ENCODE measurements at regions of chr3 and their contacts with region 1.

Region 1: DNA sequence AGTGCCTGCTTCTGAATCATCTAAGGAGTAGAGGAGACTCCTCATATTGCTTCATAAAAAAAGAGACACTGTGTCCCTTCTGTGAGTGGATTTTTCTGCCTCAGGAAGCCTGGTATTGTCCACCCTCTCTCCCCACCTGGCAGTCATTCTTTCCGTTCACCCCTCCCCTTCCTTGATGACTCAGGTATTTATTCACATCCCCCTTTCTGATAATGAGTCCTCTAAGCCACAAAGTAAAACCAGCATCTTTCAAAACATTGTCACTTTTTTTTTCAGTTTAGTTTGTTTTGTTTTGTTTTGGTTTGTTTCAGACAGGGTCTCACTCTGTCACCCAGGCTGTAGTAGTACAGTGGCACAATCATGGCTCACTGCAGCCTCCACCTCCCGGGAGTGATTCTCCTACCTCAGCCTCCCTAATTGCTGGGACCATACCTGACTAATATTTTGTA is 65.2 kb upstream of the UBE2E1 start:
- DNase-seq: peak; percentile 44
- H3K4me3 Mint-ChIP-seq: peak overlapping the region; percentile 59
- H3K27ac Mint-ChIP-seq: peak overlapping the region; percentile 85
- H3K4me1 Mint-ChIP-seq: peaks cover 45% of the 10 kb centered on the region
- H3K27me3 Mint-ChIP-seq: no peaks in the 10 kb centered on the region
- CTCF ChIP-seq: no peak

Region 2: GRCh38 chr3:23115200-23115877 is 625.2 kb before region 1 on chr3:
- CTCF ChIA-PET with region 1: interaction called, 3 read pairs
- intact Hi-C with region 1: loop called (anchors 5 kb)
- DNase-seq: no peak
- H3K4me3 Mint-ChIP-seq: no peak overlapping the region
- H3K27ac Mint-ChIP-seq: no peak overlapping the region
- H3K4me1 Mint-ChIP-seq: peaks cover 16% of the 10 kb centered on the region
- H3K27me3 Mint-ChIP-seq: peaks cover 79% of the 10 kb centered on the region
- CTCF ChIP-seq: no peak

Region 3: GRCh38 chr3:23805633-23806533 is 65.3 kb after region 1 on chr3 and contains the start of gene UBE2E1:
- CTCF ChIA-PET with region 1: no interaction called
- intact Hi-C with region 1: loop called (anchors 2 kb)
- DNase-seq: peak; percentile 54
- H3K4me3 Mint-ChIP-seq: peak within 1 kb of the TSS; percentile 85
- H3K27ac Mint-ChIP-seq: peak within 1 kb of the TSS; percentile 88
- H3K4me1 Mint-ChIP-seq: peaks cover 41% of the 10 kb centered on the region
- H3K27me3 Mint-ChIP-seq: no peaks in the 10 kb centered on the region
- CTCF ChIP-seq: no peak
- total RNA-seq, gene UBE2E1: 68.9 and 74.3 TPM in 2 replicates